ENCODE measurements at regions of chr4 and their contacts with region 1.

Region 1: DNA sequence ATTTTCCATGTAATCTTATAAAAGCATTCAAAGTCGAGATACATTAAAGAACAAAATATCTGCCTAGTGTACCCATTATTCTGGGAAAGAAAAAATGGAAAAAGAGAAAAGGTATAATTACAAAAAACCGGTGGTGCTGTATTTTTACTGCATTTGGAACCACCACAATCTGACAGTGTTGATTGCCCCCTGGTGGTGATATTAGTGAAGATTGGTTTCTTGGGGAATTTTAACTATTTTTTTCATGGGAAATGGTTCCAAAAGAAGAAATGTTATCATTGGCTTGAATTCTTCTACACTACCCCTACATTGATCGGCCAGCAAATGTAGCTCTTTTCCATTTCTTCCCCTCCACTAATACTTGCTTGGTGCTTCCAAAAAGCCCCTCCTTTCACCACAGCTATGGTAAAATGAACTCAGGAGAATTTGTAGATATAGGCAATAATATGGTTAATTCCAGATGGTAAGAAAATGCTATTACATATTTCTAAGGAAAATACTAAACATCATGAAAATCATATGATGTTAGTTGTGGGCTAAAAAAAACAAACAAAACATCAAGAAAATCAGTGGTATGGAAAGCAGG is 50.0 kb downstream of the COX18 start:
- DNase-seq: peak in 1 of 2 experiments; percentile 44
- H3K4me3 ChIP-seq: no peak overlapping the region
- H3K4me3 Mint-ChIP-seq: no peak overlapping the region
- H3K27ac Mint-ChIP-seq: no peak overlapping the region
- H3K4me1 ChIP-seq: no peaks in the 10 kb centered on the region
- H3K4me1 Mint-ChIP-seq: no peaks in the 10 kb centered on the region
- H3K27me3 ChIP-seq: no peaks in the 10 kb centered on the region
- H3K27me3 Mint-ChIP-seq: peaks cover 7% of the 10 kb centered on the region
- CTCF ChIP-seq: peak; percentile 53 to 65

Region 2: GRCh38 chr4:72326692-72327632 is 692.6 kb before region 1 on chr4:
- CTCF ChIA-PET with region 1: interaction called, 5 read pairs
- POLR2A ChIA-PET with region 1: no interaction called
- intact Hi-C with region 1: loop called (anchors 1 kb)
- DNase-seq: peak in 1 of 2 experiments; percentile 21
- H3K4me3 ChIP-seq: no peak overlapping the region
- H3K4me3 Mint-ChIP-seq: no peak overlapping the region
- H3K27ac Mint-ChIP-seq: no peak overlapping the region
- H3K4me1 ChIP-seq: no peaks in the 10 kb centered on the region
- H3K4me1 Mint-ChIP-seq: no peaks in the 10 kb centered on the region
- H3K27me3 ChIP-seq: no peaks in the 10 kb centered on the region; the same call in 1 of the 2 replicates
- H3K27me3 Mint-ChIP-seq: no peaks in the 10 kb centered on the region
- CTCF ChIP-seq: peak; percentile 54 to 56

Region 3: DNA sequence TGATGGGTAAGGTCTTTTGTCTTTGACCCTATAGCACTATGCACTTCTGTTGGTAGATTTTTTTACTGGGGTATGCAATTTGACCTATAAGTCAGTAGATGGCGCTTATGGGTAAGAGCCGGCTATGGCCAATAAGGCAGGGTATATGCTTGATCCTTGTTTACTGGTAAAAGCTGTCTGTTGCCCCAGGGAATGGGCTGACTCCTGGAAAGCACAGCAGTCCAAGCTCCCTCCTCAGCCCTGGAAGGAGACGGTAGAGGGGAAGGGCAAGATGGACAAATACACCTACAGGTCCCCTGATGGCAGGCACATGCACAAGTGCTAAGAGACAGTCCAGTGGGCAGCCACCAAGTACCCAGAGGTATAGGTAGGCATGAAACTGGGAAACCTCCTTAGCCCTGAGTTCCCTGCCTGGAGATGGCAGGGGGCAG is 514.2 kb before region 1 on chr4:
- CTCF ChIA-PET with region 1: no interaction called
- POLR2A ChIA-PET with region 1: no interaction called
- intact Hi-C with region 1: loop called (anchors 1 kb)
- DNase-seq: peak in 1 of 2 experiments; percentile 15
- H3K4me3 ChIP-seq: no peak overlapping the region
- H3K4me3 Mint-ChIP-seq: no peak overlapping the region
- H3K27ac Mint-ChIP-seq: no peak overlapping the region
- H3K4me1 ChIP-seq: no peaks in the 10 kb centered on the region
- H3K4me1 Mint-ChIP-seq: no peaks in the 10 kb centered on the region
- H3K27me3 ChIP-seq: no peaks in the 10 kb centered on the region
- H3K27me3 Mint-ChIP-seq: peaks cover 6% of the 10 kb centered on the region
- CTCF ChIP-seq: peak; percentile 45 to 54

Region 4: DNA sequence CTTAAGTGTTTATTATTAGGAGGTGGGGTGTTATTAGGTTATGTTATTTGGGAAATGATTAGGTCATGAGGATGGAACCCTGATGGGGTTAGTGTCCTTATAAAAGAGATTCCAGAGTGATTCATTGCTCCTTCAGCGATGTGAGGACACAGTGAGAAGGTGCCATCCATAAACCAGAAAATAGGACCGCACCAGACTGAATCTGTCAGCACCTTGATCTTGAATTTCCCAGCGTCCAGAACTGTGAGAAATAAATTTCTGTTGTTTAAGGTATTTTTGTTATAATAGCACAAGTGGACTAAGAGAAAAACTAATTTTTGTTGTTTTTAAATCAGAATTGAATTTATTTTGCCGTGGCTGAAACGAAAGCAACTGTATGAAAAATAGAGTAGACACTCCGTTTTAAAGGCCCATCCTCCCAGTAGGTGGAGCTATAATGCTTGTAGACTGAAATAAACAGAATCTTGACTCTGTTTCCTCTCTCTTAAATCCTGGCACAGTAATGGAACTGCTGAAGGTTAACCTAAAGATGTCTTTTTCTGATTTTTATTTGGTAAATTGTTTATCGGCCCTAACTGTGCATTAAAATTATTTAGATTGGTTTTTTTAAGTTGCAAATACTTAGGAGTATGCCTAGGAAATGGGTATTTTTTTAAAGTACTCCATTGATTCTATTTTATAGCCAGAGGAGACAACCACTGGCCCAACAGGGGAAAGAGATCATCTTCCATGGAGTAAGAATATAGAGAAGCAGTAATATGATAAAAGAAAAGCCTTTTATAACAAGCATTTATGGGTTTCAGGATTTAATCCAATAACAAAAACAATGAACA is 317.4 kb before region 1 on chr4:
- CTCF ChIA-PET with region 1: no interaction called
- POLR2A ChIA-PET with region 1: no interaction called
- intact Hi-C with region 1: loop called (anchors 1 kb)
- DNase-seq: peak in 1 of 2 experiments; percentile 41
- H3K4me3 ChIP-seq: no peak overlapping the region
- H3K4me3 Mint-ChIP-seq: peak overlapping the region; percentile 48
- H3K27ac Mint-ChIP-seq: no peak overlapping the region
- H3K4me1 ChIP-seq: no peaks in the 10 kb centered on the region
- H3K4me1 Mint-ChIP-seq: no peaks in the 10 kb centered on the region
- H3K27me3 ChIP-seq: no peaks in the 10 kb centered on the region
- H3K27me3 Mint-ChIP-seq: peaks cover 6% of the 10 kb centered on the region
- CTCF ChIP-seq: peak; percentile 25 to 55

Region 5: DNA sequence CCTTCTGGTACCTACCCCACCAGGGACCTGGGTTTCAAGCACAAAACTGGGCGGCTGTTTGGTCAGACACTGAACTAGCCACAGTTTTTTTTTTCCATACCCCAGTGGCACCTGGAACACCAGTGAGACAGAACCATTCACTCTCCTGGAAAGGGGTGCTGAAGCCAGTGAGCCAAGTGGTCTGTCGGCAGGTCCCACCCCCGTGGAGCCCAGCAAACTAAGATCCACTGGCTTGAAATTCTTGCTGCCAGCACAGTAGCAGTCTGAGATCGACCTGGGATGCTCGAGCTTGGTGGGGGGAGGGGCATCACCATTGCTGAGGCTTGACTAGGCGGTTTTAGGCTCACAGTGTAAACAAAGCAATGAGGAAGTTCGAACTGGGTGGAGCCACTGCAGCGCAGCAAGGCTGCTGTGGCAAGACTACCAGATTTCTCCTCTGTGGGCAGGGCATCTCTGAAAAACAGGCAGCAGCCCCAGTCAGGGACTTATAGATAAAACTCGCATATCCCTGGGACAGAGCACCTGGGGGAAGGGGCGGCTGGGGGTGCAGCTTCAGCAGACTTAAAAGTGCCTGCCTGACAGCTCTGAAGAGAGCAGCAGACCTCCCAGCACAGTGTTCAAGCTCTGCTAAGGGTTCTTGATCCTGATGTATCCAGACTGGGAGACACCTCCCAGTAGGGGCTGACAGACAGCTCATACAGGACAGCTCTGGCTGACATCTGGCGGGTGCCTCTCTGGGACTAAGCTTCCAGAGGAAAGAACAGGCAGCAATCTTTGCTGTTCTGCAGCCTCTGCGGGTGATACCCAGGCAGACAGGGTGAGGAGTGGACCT is 173.1 kb before region 1 on chr4:
- CTCF ChIA-PET with region 1: no interaction called
- POLR2A ChIA-PET with region 1: no interaction called
- intact Hi-C with region 1: no loop called
- DNase-seq: no peak
- H3K4me3 ChIP-seq: no peak overlapping the region
- H3K4me3 Mint-ChIP-seq: no peak overlapping the region
- H3K27ac Mint-ChIP-seq: no peak overlapping the region
- H3K4me1 ChIP-seq: no peaks in the 10 kb centered on the region
- H3K4me1 Mint-ChIP-seq: no peaks in the 10 kb centered on the region
- H3K27me3 ChIP-seq: no peaks in the 10 kb centered on the region
- H3K27me3 Mint-ChIP-seq: no peaks in the 10 kb centered on the region
- CTCF ChIP-seq: no peak

Region 6: DNA sequence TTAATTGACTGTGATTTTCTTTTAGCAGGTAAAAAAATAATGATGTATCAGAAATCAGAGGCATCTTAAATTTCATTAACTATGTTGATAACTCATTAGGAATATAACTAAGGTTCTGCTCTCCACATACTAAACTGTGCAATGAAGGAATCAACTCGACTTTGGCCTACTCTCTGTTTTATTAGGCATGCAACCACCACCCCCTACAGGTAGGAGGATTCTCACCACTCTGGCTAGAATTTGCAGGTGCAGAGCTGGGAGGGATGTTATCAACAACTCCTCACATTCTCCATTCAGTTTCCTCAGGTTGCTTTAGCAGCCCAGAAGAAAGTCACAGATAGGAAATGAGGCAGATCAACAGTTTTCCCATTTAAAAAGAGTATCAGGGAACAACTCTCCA is 110.1 kb before region 1 on chr4:
- CTCF ChIA-PET with region 1: no interaction called
- POLR2A ChIA-PET with region 1: no interaction called
- intact Hi-C with region 1: loop called (anchors 2 kb)
- DNase-seq: peak; percentile 38 to 63
- H3K4me3 ChIP-seq: no peak overlapping the region
- H3K4me3 Mint-ChIP-seq: no peak overlapping the region
- H3K27ac Mint-ChIP-seq: no peak overlapping the region
- H3K4me1 ChIP-seq: no peaks in the 10 kb centered on the region
- H3K4me1 Mint-ChIP-seq: no peaks in the 10 kb centered on the region
- H3K27me3 ChIP-seq: no peaks in the 10 kb centered on the region
- H3K27me3 Mint-ChIP-seq: no peaks in the 10 kb centered on the region
- CTCF ChIP-seq: peak; percentile 34 to 53

Region 7: GRCh38 chr4:72974694-72975487 is 44.7 kb before region 1 on chr4:
- CTCF ChIA-PET with region 1: no interaction called
- POLR2A ChIA-PET with region 1: no interaction called
- intact Hi-C with region 1: no loop called
- DNase-seq: no peak
- H3K4me3 ChIP-seq: no peak overlapping the region
- H3K4me3 Mint-ChIP-seq: no peak overlapping the region
- H3K27ac Mint-ChIP-seq: no peak overlapping the region
- H3K4me1 ChIP-seq: no peaks in the 10 kb centered on the region
- H3K4me1 Mint-ChIP-seq: no peaks in the 10 kb centered on the region
- H3K27me3 ChIP-seq: no peaks in the 10 kb centered on the region
- H3K27me3 Mint-ChIP-seq: peaks cover 4% of the 10 kb centered on the region
- CTCF ChIP-seq: no peak

Region 8: DNA sequence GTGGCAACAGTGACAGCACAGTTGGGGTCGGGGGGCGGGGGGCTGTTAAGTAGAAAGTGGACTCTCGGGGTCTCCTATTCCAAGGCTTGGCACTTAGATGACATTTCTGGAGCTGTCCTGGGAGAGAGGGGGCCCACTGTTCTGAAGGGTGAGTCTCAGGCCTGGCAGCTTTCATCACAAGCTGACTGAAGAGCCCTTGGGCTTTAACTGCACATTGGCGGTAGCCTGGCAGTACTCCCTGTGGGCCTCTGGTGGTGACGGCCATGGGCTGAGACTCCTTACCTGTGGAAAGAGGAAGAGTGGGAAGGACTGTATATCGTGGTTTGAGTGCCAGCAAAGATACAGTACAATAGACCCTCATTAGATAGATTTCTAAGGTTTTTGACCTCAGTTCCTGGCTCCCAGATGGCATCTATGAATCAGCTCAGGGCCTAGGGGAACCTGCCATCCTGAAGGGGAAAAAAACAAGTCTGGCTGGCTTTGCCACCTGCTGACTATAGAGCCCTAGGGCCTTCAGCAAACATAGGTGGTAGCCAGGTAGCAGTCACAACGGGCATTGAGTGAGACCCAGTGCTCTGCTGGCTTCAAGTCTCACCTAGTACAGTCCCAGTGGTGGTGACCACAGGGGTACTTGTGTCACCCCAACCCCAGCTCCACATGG is 151.1 kb after region 1 on chr4:
- CTCF ChIA-PET with region 1: no interaction called
- POLR2A ChIA-PET with region 1: no interaction called
- intact Hi-C with region 1: no loop called
- DNase-seq: no peak
- H3K4me3 ChIP-seq: no peak overlapping the region
- H3K4me3 Mint-ChIP-seq: no peak overlapping the region
- H3K27ac Mint-ChIP-seq: peak overlapping the region; percentile 12
- H3K4me1 ChIP-seq: no peaks in the 10 kb centered on the region
- H3K4me1 Mint-ChIP-seq: peaks cover 10% of the 10 kb centered on the region
- H3K27me3 ChIP-seq: no peaks in the 10 kb centered on the region
- H3K27me3 Mint-ChIP-seq: no peaks in the 10 kb centered on the region
- CTCF ChIP-seq: no peak

Measured in Caco-2 (cell line).